Activated CD4-positive, alpha-beta T cell treated with anti-CD3 and anti-CD28 coated beads, Interleukin-2, amount 10 ng/mL, durations not matched to agents 24 days and 14 days (primary cell): ENCODE measurements at regions of chr11 and their contacts with region 1.

Region 1: GRCh38 chr11:41461057-41461681 is 1.7 kb upstream of the LRRC4C start:
- DNase-seq: no peak
- H3K4me3 Mint-ChIP-seq: no peak overlapping the region
- H3K27ac Mint-ChIP-seq: no peak overlapping the region
- H3K4me1 Mint-ChIP-seq: no peaks in the 10 kb centered on the region
- H3K27me3 Mint-ChIP-seq: peaks cover 4% of the 10 kb centered on the region

Region 2: DNA sequence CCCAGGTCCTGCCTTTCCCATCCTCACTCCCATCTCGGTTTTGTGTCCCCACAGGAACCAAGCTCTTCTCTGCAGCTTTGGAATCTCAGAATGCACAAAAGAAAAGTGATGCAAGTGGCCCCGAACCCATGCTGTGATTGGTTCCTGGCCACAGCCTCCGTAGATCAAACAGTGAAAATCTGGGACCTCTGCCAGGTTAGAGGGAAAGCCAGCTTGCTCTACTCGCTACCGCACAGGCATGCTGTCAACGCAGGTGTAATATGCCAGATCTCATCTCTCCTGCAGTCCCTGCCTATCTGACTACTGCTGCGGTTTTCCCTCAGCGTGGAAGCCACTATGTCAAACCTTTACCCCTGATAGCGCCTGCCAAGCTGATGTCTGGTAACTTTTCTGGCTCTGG is 198.8 kb after region 1 on chr11:
- intact Hi-C with region 1: no loop called
- DNase-seq: no peak
- H3K4me3 Mint-ChIP-seq: no peak overlapping the region
- H3K27ac Mint-ChIP-seq: no peak overlapping the region
- H3K4me1 Mint-ChIP-seq: no peaks in the 10 kb centered on the region
- H3K27me3 Mint-ChIP-seq: no peaks in the 10 kb centered on the region

Region 3: DNA sequence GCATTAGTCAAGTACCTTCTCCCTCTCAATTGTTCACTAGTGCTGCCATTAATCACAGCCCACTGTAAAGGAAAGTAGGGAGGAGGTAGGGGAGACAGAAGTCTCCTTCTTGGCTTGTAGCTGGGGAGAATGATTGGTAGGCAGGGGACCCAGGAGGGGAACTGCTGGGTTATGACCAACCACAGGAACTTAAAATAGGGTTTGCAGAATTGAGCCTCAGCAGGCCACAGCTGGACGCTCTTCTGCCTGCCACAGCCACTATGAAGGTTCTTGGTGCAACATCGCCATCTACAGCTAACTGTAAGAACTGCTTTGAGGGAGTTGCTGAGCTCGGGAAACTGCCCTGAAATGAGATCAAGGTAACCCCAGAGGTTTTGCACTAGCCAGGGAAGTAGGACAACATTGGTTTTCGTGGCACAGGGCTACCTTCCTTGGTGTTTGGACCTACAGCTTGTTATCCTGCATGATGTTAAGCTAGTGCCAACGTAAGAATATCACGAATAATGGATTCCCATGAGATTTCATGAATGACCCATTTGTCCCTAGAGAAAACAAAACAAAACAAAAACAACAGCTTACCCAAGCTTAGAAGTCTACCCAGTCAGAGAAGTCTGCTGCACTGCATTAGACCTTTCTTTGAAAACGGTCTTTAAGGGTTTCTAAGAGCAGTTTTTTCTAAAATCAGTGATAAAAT is 1063.5 kb after region 1 on chr11:
- intact Hi-C with region 1: loop called (anchors 5 kb)
- DNase-seq: peak; percentile 71
- H3K4me3 Mint-ChIP-seq: no peak overlapping the region
- H3K27ac Mint-ChIP-seq: no peak overlapping the region
- H3K4me1 Mint-ChIP-seq: no peaks in the 10 kb centered on the region
- H3K27me3 Mint-ChIP-seq: no peaks in the 10 kb centered on the region